Activated CD4-positive, alpha-beta memory T cell treated with anti-CD3 and anti-CD28 coated beads, Interleukin-2, amount 10 ng/mL, durations not matched to agents 7 days and 5 days (primary cell): ENCODE measurements at regions of chr7 and their contacts with region 1.

Region 1: GRCh38 chr7:104883718-104884452 is 130.1 kb upstream of the KMT2E start:
- DNase-seq: peak; percentile 72
- H3K4me3 Mint-ChIP-seq: no peak overlapping the region
- H3K27ac Mint-ChIP-seq: no peak overlapping the region
- H3K4me1 Mint-ChIP-seq: peaks cover 15% of the 10 kb centered on the region
- H3K27me3 Mint-ChIP-seq: peaks cover 11% of the 10 kb centered on the region

Region 2: DNA sequence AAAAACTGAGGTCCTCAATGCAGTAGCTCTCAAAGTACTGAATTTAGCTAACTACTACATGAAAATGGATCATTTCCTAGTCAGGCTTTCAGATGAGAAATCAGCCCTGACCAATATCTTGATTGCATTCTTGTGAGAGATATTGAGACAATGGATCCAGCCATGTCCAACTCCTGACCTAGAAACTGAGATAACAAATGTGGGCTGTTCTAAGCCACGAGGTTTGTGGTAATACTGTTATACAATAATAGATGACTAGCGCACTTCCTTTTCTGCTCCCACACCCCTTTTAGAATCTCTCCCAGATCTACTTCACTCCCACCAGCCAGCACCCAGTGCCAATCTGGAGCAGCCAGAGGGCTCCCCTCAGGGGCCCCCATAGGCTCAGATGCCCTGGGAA is 79.2 kb before region 1 on chr7:
- CTCF ChIA-PET with region 1: no interaction called
- POLR2A ChIA-PET with region 1: no interaction called
- DNase-seq: no peak
- H3K4me3 Mint-ChIP-seq: no peak overlapping the region
- H3K27ac Mint-ChIP-seq: no peak overlapping the region
- H3K4me1 Mint-ChIP-seq: no peaks in the 10 kb centered on the region
- H3K27me3 Mint-ChIP-seq: peaks cover 24% of the 10 kb centered on the region

Region 3: GRCh38 chr7:104862719-104863118 is 21.2 kb before region 1 on chr7:
- CTCF ChIA-PET with region 1: interaction called, 21 read pairs
- POLR2A ChIA-PET with region 1: interaction called, 5 read pairs
- DNase-seq: no peak
- H3K4me3 Mint-ChIP-seq: no peak overlapping the region
- H3K27ac Mint-ChIP-seq: no peak overlapping the region
- H3K4me1 Mint-ChIP-seq: peaks cover 10% of the 10 kb centered on the region
- H3K27me3 Mint-ChIP-seq: peaks cover 29% of the 10 kb centered on the region

Region 4: GRCh38 chr7:104895522-104896236 is 11.8 kb after region 1 on chr7:
- CTCF ChIA-PET with region 1: interaction called, 57 read pairs
- POLR2A ChIA-PET with region 1: interaction called, 3 read pairs
- DNase-seq: no peak
- H3K4me3 Mint-ChIP-seq: no peak overlapping the region
- H3K27ac Mint-ChIP-seq: no peak overlapping the region
- H3K4me1 Mint-ChIP-seq: peaks cover 9% of the 10 kb centered on the region
- H3K27me3 Mint-ChIP-seq: peaks cover 3% of the 10 kb centered on the region

Region 5: DNA sequence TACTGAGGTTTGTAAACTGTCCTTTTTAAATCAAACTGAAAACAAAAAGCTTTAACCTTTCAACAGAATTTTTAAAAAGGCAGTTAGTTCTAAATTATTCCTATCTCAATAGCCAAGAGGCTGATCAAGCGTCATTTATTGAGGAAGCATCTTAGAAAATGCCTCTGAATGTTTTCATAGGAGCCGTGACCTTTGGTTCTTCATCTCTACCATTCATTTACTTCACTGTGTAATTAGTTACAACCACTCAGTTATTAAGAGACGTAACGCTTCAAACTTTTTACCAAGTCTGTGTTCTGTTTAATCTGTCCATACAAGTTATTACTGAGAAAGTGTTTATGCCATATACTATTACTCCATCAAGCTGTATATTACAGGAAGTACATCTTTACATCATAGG is 22.7 kb after region 1 on chr7:
- CTCF ChIA-PET with region 1: interaction called, 13 read pairs
- POLR2A ChIA-PET with region 1: no interaction called
- DNase-seq: no peak
- H3K4me3 Mint-ChIP-seq: no peak overlapping the region
- H3K27ac Mint-ChIP-seq: no peak overlapping the region
- H3K4me1 Mint-ChIP-seq: no peaks in the 10 kb centered on the region
- H3K27me3 Mint-ChIP-seq: peaks cover 16% of the 10 kb centered on the region

Region 6: DNA sequence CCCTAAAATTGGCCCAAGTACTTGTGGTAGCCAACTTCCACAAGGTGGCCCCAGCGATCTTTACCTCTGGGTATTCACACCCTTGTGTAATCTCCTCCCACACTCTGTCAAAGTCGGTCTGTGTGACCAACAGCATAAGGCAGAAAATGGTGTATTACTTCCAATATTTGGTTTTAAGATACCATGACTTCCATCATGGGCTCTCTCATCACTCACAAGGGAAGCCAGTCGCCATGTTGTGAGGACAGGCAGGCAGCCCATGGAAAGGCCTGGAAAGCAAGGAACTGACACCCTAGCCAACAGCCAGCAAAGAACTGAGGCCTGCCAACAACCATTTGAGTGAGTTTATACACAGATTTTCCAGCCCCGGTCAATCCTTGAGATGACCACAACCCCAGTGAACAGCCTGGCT is 39.1 kb after region 1 on chr7:
- CTCF ChIA-PET with region 1: interaction called, 136 read pairs
- POLR2A ChIA-PET with region 1: interaction called, 3 read pairs
- DNase-seq: peak; percentile 82
- H3K4me3 Mint-ChIP-seq: no peak overlapping the region
- H3K27ac Mint-ChIP-seq: no peak overlapping the region
- H3K4me1 Mint-ChIP-seq: peaks cover 10% of the 10 kb centered on the region
- H3K27me3 Mint-ChIP-seq: peaks cover 6% of the 10 kb centered on the region

Region 7: GRCh38 chr7:105067691-105068090 is 183.8 kb after region 1 on chr7:
- CTCF ChIA-PET with region 1: no interaction called
- POLR2A ChIA-PET with region 1: no interaction called
- DNase-seq: no peak
- H3K4me3 Mint-ChIP-seq: no peak overlapping the region
- H3K27ac Mint-ChIP-seq: no peak overlapping the region
- H3K4me1 Mint-ChIP-seq: peaks cover 11% of the 10 kb centered on the region
- H3K27me3 Mint-ChIP-seq: no peaks in the 10 kb centered on the region